Activated CD8-positive, alpha-beta T cell treated with anti-CD3 and anti-CD28 coated beads, Interleukin-2, amount 10 ng/mL, durations not matched to agents 7 days and 5 days (primary cell): ENCODE measurements at regions of chr2 and their contacts with region 1.

Region 1: DNA sequence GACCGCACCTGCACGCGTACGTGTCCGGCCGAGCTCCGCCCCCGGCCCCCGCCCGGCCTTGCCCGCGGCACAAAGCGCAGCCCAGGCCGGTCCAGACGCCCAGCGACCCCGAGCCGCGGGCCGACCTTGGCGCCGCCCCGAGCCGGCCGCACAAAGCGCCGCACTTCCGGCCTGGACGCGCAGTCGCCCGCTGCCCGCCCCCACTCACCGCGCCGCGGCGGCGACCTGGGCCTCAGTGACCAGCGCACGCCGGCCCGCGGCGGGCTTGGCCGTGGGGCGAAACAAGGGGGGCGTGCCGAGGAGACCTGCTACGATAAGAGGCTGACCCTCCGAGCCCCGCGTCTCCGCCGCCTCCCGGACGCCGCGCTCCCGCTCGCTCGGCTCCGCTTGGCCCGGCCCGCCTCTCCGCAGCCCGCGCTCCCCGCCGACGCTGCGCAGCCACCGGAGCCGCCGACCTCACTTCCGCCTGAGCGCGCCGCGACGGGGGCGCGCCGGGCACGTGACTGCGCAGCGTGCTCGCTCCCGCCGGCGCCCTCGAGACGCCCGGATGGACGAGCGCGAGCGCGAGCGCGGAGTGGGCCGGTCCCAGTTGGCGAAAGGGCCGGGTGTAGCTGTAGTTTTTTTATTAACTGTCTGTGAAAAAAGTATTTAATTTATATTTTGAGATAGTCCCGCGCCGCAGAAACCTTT is at the start of gene FAM168B:
- DNase-seq: peak; percentile 89
- ATAC-seq: peak; percentile 85
- H3K4me3 Mint-ChIP-seq: peak within 1 kb of the TSS; percentile 90
- H3K27ac Mint-ChIP-seq: peak within 1 kb of the TSS; percentile 96
- H3K4me1 Mint-ChIP-seq: peaks cover 17% of the 10 kb centered on the region
- H3K27me3 Mint-ChIP-seq: no peaks in the 10 kb centered on the region
- total RNA-seq, gene FAM168B: 50.8 to 51.8 TPM

Region 2: GRCh38 chr2:130911482-130911881 is 181.7 kb before region 1 on chr2:
- CTCF ChIA-PET with region 1: no interaction called
- POLR2A ChIA-PET with region 1: no interaction called
- DNase-seq: no peak
- ATAC-seq: no peak
- H3K4me3 Mint-ChIP-seq: no peak overlapping the region
- H3K27ac Mint-ChIP-seq: no peak overlapping the region
- H3K4me1 Mint-ChIP-seq: no peaks in the 10 kb centered on the region
- H3K27me3 Mint-ChIP-seq: peaks cover 12% of the 10 kb centered on the region

Region 3: DNA sequence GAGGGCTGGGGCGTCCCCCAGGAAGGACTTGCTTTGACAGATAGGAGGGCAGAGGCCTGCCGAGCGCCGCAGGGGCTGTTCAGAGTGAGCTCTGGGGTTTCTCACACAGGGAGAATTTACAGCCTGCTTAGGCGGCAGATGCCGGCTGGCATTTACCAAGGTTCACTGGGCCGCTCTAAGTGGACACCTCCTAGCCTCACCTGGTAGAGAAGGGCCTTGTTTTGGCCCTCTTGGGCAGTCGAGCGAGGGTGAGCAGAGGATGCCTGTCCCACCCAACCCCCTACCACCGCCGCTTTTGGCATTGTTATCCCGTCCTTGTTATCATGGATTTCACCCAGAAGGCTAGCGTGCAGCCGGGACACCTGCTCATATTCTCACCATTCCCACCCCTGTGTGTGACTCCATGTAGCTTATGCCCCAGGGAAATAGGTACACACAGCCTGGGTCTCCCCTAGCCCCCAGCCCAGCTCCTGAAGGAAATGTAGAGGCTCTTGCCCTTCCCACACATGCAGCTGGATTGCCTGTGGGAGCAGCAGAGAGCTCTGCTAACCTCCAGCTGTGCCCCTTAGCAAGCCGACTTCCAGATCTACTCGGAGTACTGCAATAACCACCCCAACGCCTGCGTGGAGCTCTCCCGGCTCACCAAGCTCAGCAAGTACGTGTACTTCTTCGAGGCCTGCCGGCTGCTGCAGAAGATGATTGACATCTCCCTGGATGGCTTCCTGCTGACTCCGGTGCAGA is 52.3 kb before region 1 on chr2:
- CTCF ChIA-PET with region 1: interaction called, 4 read pairs
- POLR2A ChIA-PET with region 1: interaction called, 24 read pairs
- DNase-seq: peak; percentile 58
- ATAC-seq: peak; percentile 50
- H3K4me3 Mint-ChIP-seq: peak overlapping the region; percentile 84
- H3K27ac Mint-ChIP-seq: peak overlapping the region; percentile 86
- H3K4me1 Mint-ChIP-seq: peaks cover 47% of the 10 kb centered on the region
- H3K27me3 Mint-ChIP-seq: peaks cover 6% of the 10 kb centered on the region

Region 4: GRCh38 chr2:131105156-131105949 is 12.2 kb after region 1 on chr2 and contains the start of gene PLEKHB2:
- CTCF ChIA-PET with region 1: interaction called, 15 read pairs
- POLR2A ChIA-PET with region 1: interaction called, 70 read pairs
- DNase-seq: peak; percentile 94
- ATAC-seq: peak; percentile 77
- H3K4me3 Mint-ChIP-seq: peak within 1 kb of the TSS; percentile 85
- H3K27ac Mint-ChIP-seq: peak within 1 kb of the TSS; percentile 89
- H3K4me1 Mint-ChIP-seq: peaks cover 48% of the 10 kb centered on the region
- H3K27me3 Mint-ChIP-seq: no peaks in the 10 kb centered on the region
- total RNA-seq, gene PLEKHB2: 62.0 to 64.5 TPM

Region 5: GRCh38 chr2:131125195-131125757 is 32.1 kb after region 1 on chr2:
- CTCF ChIA-PET with region 1: no interaction called
- POLR2A ChIA-PET with region 1: no interaction called
- DNase-seq: no peak
- ATAC-seq: no peak
- H3K4me3 Mint-ChIP-seq: no peak overlapping the region
- H3K27ac Mint-ChIP-seq: no peak overlapping the region
- H3K4me1 Mint-ChIP-seq: no peaks in the 10 kb centered on the region
- H3K27me3 Mint-ChIP-seq: no peaks in the 10 kb centered on the region